Activated T-helper 1 cell treated with anti-CD3 and anti-CD28 coated beads, Interleukin-12 subunit alpha, Interleukin-12 subunit beta, Interleukin-2, Interleukin-4 antibody, amounts not matched to agents 30 ng/mL and 10 ng/mL and 1 ng/mL, durations not matched to agents 14 hours and 24 hours and 36 hours (primary cell): ENCODE measurements at regions of chr4 and their contacts with region 1.

Region 1: DNA sequence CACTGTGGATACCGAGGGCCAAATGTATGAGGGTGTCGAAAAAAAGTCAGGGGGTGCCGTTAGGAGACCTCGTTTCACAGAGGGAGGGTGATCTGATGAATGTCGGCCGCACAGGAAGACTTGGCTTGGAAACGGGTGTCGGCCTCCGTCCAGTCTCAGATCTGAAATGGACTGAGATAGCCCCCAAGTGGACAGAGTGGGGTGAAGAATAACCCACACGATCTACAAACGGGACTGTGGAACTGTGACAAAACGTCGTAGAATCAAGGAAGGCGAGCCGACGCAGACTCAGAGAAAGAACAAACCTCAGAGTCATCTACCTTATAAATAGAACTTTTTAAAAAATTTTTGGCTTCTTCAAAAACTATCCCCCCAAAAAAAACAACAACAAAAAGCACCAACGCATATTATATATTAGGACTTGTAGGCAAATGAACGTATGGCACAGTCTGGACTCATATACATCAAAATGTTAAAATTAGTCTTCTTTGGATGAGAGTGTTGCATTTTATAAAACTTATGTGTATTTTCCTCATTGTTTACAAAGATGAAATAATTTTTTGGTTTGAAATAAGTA is 63.8 kb upstream of the IRF2 start:
- DNase-seq: peak; percentile 55
- H3K4me3 Mint-ChIP-seq: peak overlapping the region; percentile 91
- H3K27ac Mint-ChIP-seq: peak overlapping the region; percentile 94
- H3K4me1 Mint-ChIP-seq: peaks cover 64% of the 10 kb centered on the region
- H3K27me3 Mint-ChIP-seq: no peaks in the 10 kb centered on the region

Region 2: GRCh38 chr4:183504064-183504929 is 1033.8 kb before region 1 on chr4:
- intact Hi-C with region 1: loop called (anchors 10 kb)
- DNase-seq: peak; percentile 100
- H3K4me3 Mint-ChIP-seq: peak overlapping the region; percentile 92
- H3K27ac Mint-ChIP-seq: peak overlapping the region; percentile 97
- H3K4me1 Mint-ChIP-seq: peaks cover 23% of the 10 kb centered on the region
- H3K27me3 Mint-ChIP-seq: no peaks in the 10 kb centered on the region

Region 3: GRCh38 chr4:184287697-184288255 is 250.3 kb before region 1 on chr4:
- intact Hi-C with region 1: loop called (anchors 1 kb)
- DNase-seq: no peak
- H3K4me3 Mint-ChIP-seq: peak overlapping the region; percentile 12
- H3K27ac Mint-ChIP-seq: peak overlapping the region; percentile 13
- H3K4me1 Mint-ChIP-seq: peaks cover 53% of the 10 kb centered on the region
- H3K27me3 Mint-ChIP-seq: no peaks in the 10 kb centered on the region

Region 4: DNA sequence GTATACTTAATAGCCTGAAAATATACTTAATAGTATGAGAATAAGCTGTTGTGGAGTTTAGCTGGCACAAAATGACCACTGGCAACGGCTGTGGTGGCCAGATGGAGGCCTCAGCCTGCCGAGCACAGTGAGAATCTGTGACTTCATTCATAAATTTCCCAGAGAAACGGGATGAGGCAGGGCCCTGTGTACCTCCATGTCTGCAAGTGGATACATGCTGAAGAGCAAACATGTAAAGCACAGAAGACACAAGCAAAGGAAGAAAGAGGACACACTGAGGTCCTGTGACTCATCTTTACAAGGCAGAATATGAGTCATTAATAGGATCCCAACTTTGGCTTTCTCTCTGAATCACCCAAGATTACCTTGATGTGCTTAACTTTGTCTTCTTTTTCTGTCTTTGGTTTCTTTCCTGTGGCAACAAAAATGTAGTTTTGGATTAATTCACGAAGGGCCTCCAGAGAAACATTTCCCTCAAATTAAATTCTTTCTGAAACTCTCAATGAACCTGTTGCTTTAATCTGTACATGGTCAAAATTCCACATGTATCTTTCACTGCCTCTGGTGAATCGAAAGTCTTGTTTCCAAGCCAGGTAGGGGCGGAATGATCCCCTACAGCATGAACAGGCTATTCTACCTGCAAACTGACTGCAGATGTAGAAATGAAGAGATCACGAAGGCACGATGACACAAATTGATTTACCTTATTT is 120.2 kb before region 1 on chr4:
- intact Hi-C with region 1: loop called (anchors 1 kb)
- DNase-seq: peak; percentile 21
- H3K4me3 Mint-ChIP-seq: peak overlapping the region; percentile 78
- H3K27ac Mint-ChIP-seq: peak overlapping the region; percentile 95
- H3K4me1 Mint-ChIP-seq: peaks cover 90% of the 10 kb centered on the region
- H3K27me3 Mint-ChIP-seq: no peaks in the 10 kb centered on the region

Region 5: GRCh38 chr4:184514121-184514988 is 23.8 kb before region 1 on chr4:
- intact Hi-C with region 1: loop called (anchors 1 kb)
- DNase-seq: peak; percentile 56
- H3K4me3 Mint-ChIP-seq: peak overlapping the region; percentile 46
- H3K27ac Mint-ChIP-seq: peak overlapping the region; percentile 93
- H3K4me1 Mint-ChIP-seq: peaks cover 56% of the 10 kb centered on the region
- H3K27me3 Mint-ChIP-seq: no peaks in the 10 kb centered on the region

Region 6: DNA sequence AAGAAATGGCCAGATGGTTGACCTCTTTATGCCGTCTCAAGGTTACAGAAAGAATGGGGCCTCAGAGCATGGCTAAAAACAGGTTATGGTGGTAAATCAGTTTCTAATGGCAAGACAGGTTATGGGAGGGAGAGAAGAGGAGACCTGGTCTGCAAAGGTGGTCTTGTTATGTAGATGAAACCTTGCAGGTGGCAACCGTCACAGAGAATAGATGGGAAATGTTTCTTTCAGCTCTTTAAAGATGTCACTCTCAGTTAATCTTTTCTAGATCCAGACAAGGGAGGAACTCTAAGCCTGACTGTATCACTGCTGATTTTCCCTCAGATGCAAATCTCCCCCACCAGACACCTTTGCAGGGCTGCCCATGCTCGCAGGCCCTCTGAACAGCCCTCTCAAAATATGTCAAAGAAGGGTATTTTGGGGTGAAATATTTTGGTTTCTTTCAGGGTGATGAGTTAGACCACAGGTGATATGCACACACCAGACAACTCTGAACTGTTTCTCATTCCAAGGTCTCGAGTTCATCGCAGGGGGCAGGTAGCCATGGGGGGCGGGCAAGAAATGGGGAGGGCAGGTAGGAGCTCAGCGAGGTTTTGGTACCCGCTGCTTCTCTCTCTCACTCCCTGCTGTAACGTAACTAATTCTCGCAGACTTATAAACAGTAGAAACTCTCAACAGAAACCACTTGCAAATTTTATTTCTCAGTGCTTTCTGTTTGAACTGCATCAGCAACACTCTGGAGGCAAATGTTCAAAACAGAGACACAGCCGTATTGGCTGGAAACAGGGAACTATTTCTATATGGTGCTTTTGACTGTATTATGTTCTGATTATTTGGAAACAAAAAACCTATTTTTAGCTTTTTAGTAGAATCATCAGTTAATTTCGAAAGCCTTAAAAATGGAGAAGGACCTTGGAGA is 78.8 kb after region 1 on chr4:
- intact Hi-C with region 1: no loop called
- DNase-seq: no peak
- H3K4me3 Mint-ChIP-seq: no peak overlapping the region
- H3K27ac Mint-ChIP-seq: no peak overlapping the region
- H3K4me1 Mint-ChIP-seq: no peaks in the 10 kb centered on the region
- H3K27me3 Mint-ChIP-seq: no peaks in the 10 kb centered on the region

Region 7: DNA sequence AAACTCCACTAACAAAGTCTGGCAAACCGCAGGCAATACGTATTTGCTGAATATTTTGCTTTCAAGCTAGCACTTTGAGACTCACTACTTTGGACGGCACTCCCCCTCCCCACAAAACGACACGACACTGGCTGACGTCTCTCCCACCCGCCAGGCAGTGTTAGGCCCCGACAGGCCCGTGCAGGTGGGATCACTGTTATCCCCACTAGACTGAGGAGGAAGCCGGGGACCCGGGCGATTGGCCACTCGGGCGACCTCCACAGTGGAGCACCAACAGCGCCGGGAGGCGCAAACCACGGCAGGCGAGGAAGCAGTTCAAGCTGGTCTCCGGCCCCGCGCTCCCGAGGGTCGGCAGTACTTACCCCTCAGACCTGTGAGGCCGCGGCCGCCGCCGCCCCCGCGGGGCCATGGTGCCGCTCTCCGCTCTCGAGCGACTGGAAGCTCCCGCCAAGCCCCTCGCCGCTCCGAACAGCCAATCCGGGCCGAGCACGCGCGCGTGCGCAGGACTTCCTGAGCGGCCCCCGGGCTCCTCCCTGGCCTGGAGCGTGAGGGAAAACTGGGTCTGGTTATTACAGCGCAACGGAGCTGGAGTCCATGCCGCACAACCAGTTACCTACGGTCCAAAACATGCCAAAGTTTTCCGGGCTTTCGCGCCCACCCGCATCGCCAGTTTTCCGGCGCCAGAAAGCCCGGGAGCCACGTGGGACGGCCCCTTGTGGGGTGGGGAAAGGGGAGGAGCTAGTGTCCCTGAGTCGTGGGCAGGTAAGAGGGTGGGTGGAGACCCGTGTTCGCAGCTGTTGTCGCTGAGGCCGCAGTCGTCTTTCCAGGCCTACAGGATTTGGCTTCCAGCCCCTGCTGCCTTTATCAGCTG is 195.8 kb after region 1 on chr4 and contains the start of gene CENPU:
- intact Hi-C with region 1: loop called (anchors 1 kb)
- DNase-seq: peak; percentile 96
- H3K4me3 Mint-ChIP-seq: peak within 1 kb of the TSS; percentile 94
- H3K27ac Mint-ChIP-seq: peak within 1 kb of the TSS; percentile 95
- H3K4me1 Mint-ChIP-seq: peaks cover 50% of the 10 kb centered on the region
- H3K27me3 Mint-ChIP-seq: no peaks in the 10 kb centered on the region
- total RNA-seq, gene CENPU: 78.3 and 80.3 TPM in 2 replicates